Panc1 (cell line): ENCODE measurements at regions of chr1 and their contacts with region 1.

Region 1: DNA sequence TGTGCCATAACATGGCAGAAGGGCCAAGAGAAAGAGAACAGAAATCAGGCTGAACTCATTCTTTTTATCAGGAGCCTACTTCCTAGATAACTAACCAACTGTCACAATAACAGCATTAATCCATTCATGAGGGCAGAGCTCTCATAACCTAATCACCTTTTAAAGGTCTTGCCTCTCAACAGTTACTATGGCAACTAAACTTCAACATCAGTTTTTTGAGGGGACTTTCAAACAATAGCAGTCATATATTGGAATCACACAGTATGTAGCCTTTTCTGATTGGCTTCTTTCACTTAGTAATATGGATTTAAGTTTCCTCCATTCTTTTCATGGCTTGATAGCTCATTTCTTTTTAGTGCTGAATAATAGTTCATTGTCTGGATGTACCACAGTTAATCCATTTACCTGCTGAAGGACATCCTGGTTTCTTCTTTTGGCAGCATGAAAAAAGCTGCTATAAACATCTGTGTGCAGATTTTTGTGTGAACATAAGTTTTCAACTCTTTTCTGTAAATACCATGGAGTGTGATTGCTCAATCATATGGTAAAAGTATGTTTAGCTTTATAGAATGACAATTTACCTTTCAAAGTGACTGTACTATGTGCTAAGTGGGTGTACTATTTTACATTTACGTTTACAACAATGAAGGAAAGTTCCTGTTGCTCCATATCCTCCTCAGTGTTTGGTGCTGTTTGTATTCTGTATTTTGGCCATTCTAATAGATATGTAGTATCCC is 49.2 kb downstream of the RUNX3 start:
- DNase-seq: no peak
- ATAC-seq: no peak
- H3K4me3 ChIP-seq: no peak overlapping the region
- H3K27ac ChIP-seq: no peak overlapping the region
- H3K4me1 ChIP-seq: no peaks in the 10 kb centered on the region
- H3K27me3 ChIP-seq: peaks cover 7% of the 10 kb centered on the region; the same call in 1 of the 2 replicates
- CTCF ChIP-seq: no peak

Region 2: DNA sequence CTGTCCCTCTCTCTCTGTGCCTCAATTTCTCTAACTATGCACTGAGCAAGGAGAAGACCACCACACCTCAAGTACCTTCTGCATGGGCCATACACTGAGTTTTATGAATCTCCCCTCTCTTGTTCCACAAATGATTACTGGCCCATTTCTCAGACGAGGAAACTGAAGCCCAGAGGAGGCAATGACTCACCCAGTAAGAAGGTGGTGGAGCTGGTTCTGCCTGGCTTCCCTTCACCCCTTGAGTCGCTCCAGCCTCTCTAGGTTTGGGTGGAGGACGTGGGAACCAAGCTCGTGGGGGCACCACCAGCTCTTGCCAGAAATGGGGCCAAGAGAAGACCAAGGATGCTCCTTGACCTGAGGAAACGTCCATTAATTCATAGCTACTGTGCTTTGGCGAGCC is 70.5 kb after region 1 on chr1:
- CTCF ChIA-PET with region 1: no interaction called
- POLR2A ChIA-PET with region 1: interaction called, 10 read pairs
- in situ Hi-C with region 1: no loop called
- intact Hi-C with region 1: no loop called
- DNase-seq: no peak
- ATAC-seq: no peak
- H3K4me3 ChIP-seq: no peak overlapping the region
- H3K27ac ChIP-seq: no peak overlapping the region
- H3K4me1 ChIP-seq: no peaks in the 10 kb centered on the region
- H3K27me3 ChIP-seq: no peaks in the 10 kb centered on the region
- CTCF ChIP-seq: no peak